PC-3 (cell line): ENCODE measurements at regions of chr7 and their contacts with region 1.

Region 1: GRCh38 chr7:88357781-88358525 is 51.3 kb upstream of the STEAP4 start:
- DNase-seq: peak; percentile 54
- ATAC-seq: peak; percentile 75
- H3K4me3 ChIP-seq: peak overlapping the region; percentile 46
- H3K27ac ChIP-seq: no peak overlapping the region
- H3K4me1 ChIP-seq: 0 out of 2 replicates have a peak, but pooled peaks cover 6% of the 10 kb centered on the region
- H3K27me3 ChIP-seq: no peaks in the 10 kb centered on the region
- CTCF ChIP-seq: peak; percentile 76

Region 2: DNA sequence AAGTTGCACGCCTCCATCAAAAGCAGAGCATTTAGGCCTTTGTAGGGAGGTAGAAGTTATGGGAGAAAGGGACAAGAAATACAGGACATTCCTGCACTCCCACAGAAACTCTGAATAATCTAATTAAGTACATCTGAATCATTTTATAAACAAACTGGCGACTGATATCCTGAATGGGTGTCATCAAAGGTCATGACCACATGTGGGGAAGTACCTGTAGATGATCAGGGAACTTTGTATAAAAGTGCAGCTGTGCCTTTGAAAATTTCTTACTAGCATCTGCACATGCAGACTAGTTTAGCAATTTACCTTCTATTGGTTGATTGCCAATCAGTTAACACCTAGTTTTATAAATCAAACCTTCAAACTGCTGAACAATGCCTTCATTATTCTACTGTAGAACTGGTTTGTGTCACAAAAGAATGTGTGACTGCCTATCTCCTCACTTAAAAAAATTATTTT is 68.4 kb before region 1 on chr7:
- CTCF ChIA-PET with region 1: no interaction called
- POLR2A ChIA-PET with region 1: no interaction called
- intact Hi-C with region 1: loop called (anchors 1 kb)
- DNase-seq: peak; percentile 88
- ATAC-seq: peak; percentile 77
- H3K4me3 ChIP-seq: no peak overlapping the region; the same call in 1 of the 2 replicates
- H3K27ac ChIP-seq: peak overlapping the region; percentile 94
- H3K4me1 ChIP-seq: peaks cover 40% of the 10 kb centered on the region
- H3K27me3 ChIP-seq: no peaks in the 10 kb centered on the region
- CTCF ChIP-seq: no peak

Region 3: DNA sequence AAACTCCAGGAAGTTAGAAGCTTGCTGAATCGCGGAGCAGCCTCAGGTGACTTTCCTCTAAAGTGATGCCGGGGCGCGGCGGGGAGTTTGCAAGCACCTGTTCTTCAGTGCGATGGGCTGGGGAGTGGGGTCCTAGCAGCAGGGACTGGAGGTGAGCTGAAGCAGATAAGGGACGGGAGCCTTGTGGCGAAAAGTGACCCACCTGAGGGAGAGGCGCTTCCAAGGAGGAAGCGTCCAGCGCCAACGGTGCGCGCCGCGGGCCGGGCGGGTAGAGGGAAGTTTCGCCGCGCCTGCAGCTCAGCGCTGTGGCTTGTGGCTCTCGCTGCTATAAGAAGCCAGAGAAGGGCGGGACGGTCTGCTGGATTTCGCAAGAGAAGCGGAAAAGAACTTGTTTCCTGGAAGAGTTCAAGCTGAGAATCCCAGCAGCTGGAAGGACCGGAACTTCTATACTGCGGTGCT is 51.3 kb before region 1 on chr7 and contains the start of gene STEAP4:
- CTCF ChIA-PET with region 1: no interaction called
- POLR2A ChIA-PET with region 1: no interaction called
- intact Hi-C with region 1: loop called (anchors 1 kb)
- DNase-seq: peak; percentile 87
- ATAC-seq: peak; percentile 78
- H3K4me3 ChIP-seq: peak within 1 kb of the TSS; percentile 83
- H3K27ac ChIP-seq: peak within 1 kb of the TSS; percentile 44
- H3K4me1 ChIP-seq: peaks cover 36% of the 10 kb centered on the region
- H3K27me3 ChIP-seq: no peaks in the 10 kb centered on the region
- CTCF ChIP-seq: no peak
- total RNA-seq, gene STEAP4: 1.2 and 1.7 TPM in 2 replicates

Region 4: DNA sequence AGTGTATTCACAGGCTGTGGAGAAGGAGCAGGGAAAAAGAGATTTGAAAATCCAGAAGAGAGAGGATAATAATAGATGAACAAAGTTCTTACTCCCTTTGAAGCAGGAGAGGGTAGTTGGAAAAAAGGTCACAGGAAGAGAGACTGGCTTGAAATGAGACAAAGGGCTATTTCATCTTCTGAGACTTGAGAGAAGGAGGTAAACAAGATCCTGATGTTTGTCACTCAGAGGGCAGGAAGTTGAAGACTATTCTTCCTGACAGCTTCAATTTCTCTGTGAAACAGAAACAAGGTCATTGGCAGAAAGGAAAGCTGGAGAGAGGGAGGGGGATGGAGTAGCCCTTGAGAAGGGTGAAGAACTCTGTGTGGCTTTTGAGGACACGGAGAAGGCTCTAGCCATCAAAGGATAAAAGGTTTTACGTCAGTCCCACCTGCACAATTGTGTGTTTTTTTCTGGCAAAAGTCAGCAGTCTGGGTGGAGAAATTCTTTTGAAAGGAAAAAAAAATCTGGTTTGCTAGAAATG is 164.9 kb after region 1 on chr7:
- CTCF ChIA-PET with region 1: no interaction called
- POLR2A ChIA-PET with region 1: no interaction called
- intact Hi-C with region 1: no loop called
- DNase-seq: no peak
- ATAC-seq: no peak
- H3K4me3 ChIP-seq: no peak overlapping the region
- H3K27ac ChIP-seq: no peak overlapping the region
- H3K4me1 ChIP-seq: no peaks in the 10 kb centered on the region
- H3K27me3 ChIP-seq: no peaks in the 10 kb centered on the region
- CTCF ChIP-seq: no peak